MCF 10A (cell line): ENCODE measurements at regions of chr3 and their contacts with region 1.

Region 1: GRCh38 chr3:102229062-102229655 is 205.7 kb upstream of the ZPLD1 start:
- DNase-seq: peak; percentile 84
- H3K4me3 Mint-ChIP-seq: no peak overlapping the region
- H3K27ac Mint-ChIP-seq: no peak overlapping the region
- H3K4me1 Mint-ChIP-seq: peaks cover 5% of the 10 kb centered on the region
- H3K27me3 Mint-ChIP-seq: no peaks in the 10 kb centered on the region
- CTCF ChIP-seq: peak; percentile 92

Region 2: DNA sequence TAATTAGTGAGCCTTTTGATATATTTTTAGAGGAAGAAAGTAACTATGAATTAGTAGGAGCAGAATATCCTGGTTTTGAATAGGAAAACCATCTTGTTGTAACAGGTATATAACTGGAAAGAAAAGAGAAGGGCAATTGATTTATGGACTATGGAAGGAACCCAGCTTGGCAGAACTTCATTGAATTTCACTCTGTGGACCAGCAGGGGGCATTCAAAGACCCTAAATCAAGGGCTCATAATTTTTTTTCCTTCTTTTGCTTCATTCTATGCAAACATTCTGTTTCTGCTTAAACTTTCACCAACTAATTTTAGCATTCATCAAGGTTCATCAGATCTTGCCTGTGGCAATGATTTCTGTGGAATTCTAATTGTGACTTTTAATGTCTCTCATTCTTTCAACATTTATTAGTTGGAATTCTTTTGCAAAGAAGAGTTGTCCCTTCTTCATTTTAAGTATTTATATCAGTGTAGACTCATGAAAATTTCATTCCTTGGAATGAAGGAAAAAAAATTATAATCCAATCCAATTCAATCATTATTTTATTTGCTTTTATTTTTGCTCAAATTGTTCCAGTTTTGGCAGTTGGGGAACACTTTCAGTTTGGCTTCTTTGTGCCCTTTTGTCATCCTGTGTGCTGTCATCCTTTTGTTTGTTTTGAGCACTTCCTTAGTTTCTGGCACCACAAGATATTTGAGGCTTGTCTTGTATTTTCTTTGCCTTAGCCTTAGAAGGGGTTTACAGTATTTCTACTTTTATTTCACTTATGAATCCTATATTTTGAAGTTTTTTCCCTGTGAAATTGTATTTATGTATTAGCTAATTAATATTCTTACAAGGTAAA is 419.8 kb before region 1 on chr3:
- CTCF ChIA-PET with region 1: interaction called, 795 read pairs
- POLR2A ChIA-PET with region 1: interaction called, 26 read pairs
- intact Hi-C with region 1: loop called (anchors 1 kb)
- DNase-seq: peak; percentile 46
- H3K4me3 Mint-ChIP-seq: no peak overlapping the region
- H3K27ac Mint-ChIP-seq: no peak overlapping the region
- H3K4me1 Mint-ChIP-seq: peaks cover 10% of the 10 kb centered on the region
- H3K27me3 Mint-ChIP-seq: no peaks in the 10 kb centered on the region
- CTCF ChIP-seq: peak; percentile 64

Region 3: GRCh38 chr3:101879111-101879510 is 350.0 kb before region 1 on chr3:
- CTCF ChIA-PET with region 1: interaction called, 10 read pairs
- POLR2A ChIA-PET with region 1: no interaction called
- intact Hi-C with region 1: no loop called
- DNase-seq: no peak
- H3K4me3 Mint-ChIP-seq: no peak overlapping the region
- H3K27ac Mint-ChIP-seq: no peak overlapping the region
- H3K4me1 Mint-ChIP-seq: peaks cover 6% of the 10 kb centered on the region
- H3K27me3 Mint-ChIP-seq: no peaks in the 10 kb centered on the region
- CTCF ChIP-seq: no peak

Region 4: DNA sequence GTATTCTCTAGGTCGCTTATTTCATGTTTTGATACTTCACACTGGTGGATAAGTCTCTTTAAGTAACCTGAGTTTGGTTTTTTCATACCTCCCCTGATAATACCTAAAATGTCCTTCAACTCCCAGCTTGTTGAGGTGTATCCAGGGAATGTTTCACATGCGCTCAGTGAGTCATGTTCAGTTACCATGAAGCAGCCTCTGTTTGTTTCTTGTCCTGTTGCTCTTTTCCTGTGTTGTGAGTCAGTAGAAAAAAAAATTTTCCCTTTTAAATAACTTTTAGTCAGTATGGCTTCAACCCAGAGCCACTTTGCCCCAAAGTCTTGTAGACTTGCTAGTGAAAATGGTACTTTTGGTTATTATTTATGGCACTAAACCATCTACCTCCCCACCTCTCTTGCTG is 72.7 kb before region 1 on chr3:
- CTCF ChIA-PET with region 1: interaction called, 5 read pairs
- POLR2A ChIA-PET with region 1: no interaction called
- intact Hi-C with region 1: loop called (anchors 2 kb)
- DNase-seq: peak; percentile 90
- H3K4me3 Mint-ChIP-seq: no peak overlapping the region
- H3K27ac Mint-ChIP-seq: peak overlapping the region; percentile 98
- H3K4me1 Mint-ChIP-seq: peaks cover 25% of the 10 kb centered on the region
- H3K27me3 Mint-ChIP-seq: no peaks in the 10 kb centered on the region
- CTCF ChIP-seq: no peak

Region 5: GRCh38 chr3:102374863-102375634 is 145.9 kb after region 1 on chr3:
- CTCF ChIA-PET with region 1: interaction called, 10 read pairs
- POLR2A ChIA-PET with region 1: no interaction called
- intact Hi-C with region 1: no loop called
- DNase-seq: no peak
- H3K4me3 Mint-ChIP-seq: no peak overlapping the region
- H3K27ac Mint-ChIP-seq: no peak overlapping the region
- H3K4me1 Mint-ChIP-seq: peaks cover 20% of the 10 kb centered on the region
- H3K27me3 Mint-ChIP-seq: no peaks in the 10 kb centered on the region
- CTCF ChIP-seq: no peak

Region 6: GRCh38 chr3:102536456-102536855 is 307.3 kb after region 1 on chr3:
- CTCF ChIA-PET with region 1: interaction called, 672 read pairs
- POLR2A ChIA-PET with region 1: interaction called, 35 read pairs
- intact Hi-C with region 1: loop called (anchors 1 kb)
- DNase-seq: peak; percentile 55
- H3K4me3 Mint-ChIP-seq: no peak overlapping the region
- H3K27ac Mint-ChIP-seq: no peak overlapping the region
- H3K4me1 Mint-ChIP-seq: peaks cover 16% of the 10 kb centered on the region
- H3K27me3 Mint-ChIP-seq: no peaks in the 10 kb centered on the region
- CTCF ChIP-seq: peak; percentile 48